ENCODE measurements at regions of chr17 and their contacts with region 1.

Region 1: GRCh38 chr17:48270896-48271295 is 159.1 kb downstream of the SKAP1 start:
- DNase-seq: no peak
- H3K4me3 Mint-ChIP-seq: no peak overlapping the region
- H3K27ac Mint-ChIP-seq: no peak overlapping the region
- H3K4me1 Mint-ChIP-seq: peaks cover 6% of the 10 kb centered on the region
- H3K27me3 Mint-ChIP-seq: no peaks in the 10 kb centered on the region

Region 2: DNA sequence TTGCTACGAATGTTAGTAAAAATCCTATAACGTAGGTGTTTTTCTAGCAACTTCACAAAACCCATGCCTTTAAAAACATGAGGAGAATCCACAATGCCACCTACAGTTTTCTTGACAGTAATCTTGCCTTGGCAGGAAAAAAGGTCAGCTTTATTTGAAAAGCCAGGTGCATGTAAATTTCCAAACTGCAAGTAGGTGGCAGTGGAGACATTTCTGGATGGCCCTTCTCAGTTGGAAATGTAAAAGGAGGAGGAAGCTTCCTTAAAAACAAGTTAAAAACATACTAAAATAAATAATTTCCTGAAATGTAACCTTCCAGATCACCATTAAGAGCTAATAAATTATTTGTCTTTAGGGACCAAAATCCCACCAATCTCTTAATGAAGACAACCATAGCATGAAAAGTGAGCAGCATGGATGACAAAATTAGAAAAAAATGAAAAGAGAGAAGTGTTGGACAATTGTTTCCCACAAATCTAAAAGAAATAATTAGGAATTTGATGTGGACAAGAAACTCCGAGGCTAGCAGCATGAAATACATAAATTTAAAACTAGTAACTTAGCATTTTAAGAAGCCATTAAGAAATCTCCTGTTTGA is 11.1 kb before region 1 on chr17:
- CTCF ChIA-PET with region 1: interaction called, 11 read pairs
- POLR2A ChIA-PET with region 1: no interaction called
- DNase-seq: no peak
- H3K4me3 Mint-ChIP-seq: no peak overlapping the region
- H3K27ac Mint-ChIP-seq: no peak overlapping the region
- H3K4me1 Mint-ChIP-seq: peaks cover 8% of the 10 kb centered on the region
- H3K27me3 Mint-ChIP-seq: no peaks in the 10 kb centered on the region

Measured in activated CD4-positive, alpha-beta memory T cell treated with anti-CD3 and anti-CD28 coated beads, Interleukin-2, amount 10 ng/mL, durations not matched to agents 7 days and 5 days (primary cell).